Naive thymus-derived CD4-positive, alpha-beta T cell (primary cell): ENCODE measurements at regions of chr1 and their contacts with region 1.

Region 1: GRCh38 chr1:160837558-160838205 is 25.0 kb downstream of the CD244 start:
- DNase-seq: peak; percentile 52 to 91 (median 87)
- ATAC-seq: peak; percentile 97
- H3K4me3 ChIP-seq: peak overlapping the region; percentile 37
- H3K4me3 Mint-ChIP-seq: peak overlapping the region; percentile 62 to 90 (median 76)
- H3K27ac ChIP-seq: peak overlapping the region; percentile 69
- H3K27ac Mint-ChIP-seq: peak overlapping the region; percentile 78 to 98 (median 95)
- H3K4me1 ChIP-seq: peaks cover 50 to 60% of the 10 kb centered on the region in 2 donors
- H3K4me1 Mint-ChIP-seq: peaks cover 57 to 83% (median 71%) of the 10 kb centered on the region in 7 donors
- H3K27me3 ChIP-seq: no peaks in the 10 kb centered on the region
- H3K27me3 Mint-ChIP-seq: no peaks in the 10 kb centered on the region

Region 2: GRCh38 chr1:159924981-159925712 is 912.5 kb before region 1 on chr1 and contains the start of gene TAGLN2:
- CTCF ChIA-PET with region 1: no interaction called
- POLR2A ChIA-PET with region 1: no interaction called
- intact Hi-C with region 1: no loop called
- DNase-seq: peak; percentile 81 to 94 (median 86)
- ATAC-seq: peak; percentile 63
- H3K4me3 ChIP-seq: peak within 1 kb of the TSS; percentile 95
- H3K4me3 Mint-ChIP-seq: peak within 1 kb of the TSS; percentile 88 to 99 (median 94)
- H3K27ac ChIP-seq: peak within 1 kb of the TSS; percentile 95
- H3K27ac Mint-ChIP-seq: peak within 1 kb of the TSS; percentile 96 to 100 (median 99)
- H3K4me1 ChIP-seq: peaks cover 27 to 35% of the 10 kb centered on the region in 2 donors
- H3K4me1 Mint-ChIP-seq: peaks cover 34 to 54% (median 46%) of the 10 kb centered on the region in 7 donors
- H3K27me3 ChIP-seq: no peaks in the 10 kb centered on the region
- H3K27me3 Mint-ChIP-seq: peaks cover 0 to 11% (median 0%) of the 10 kb centered on the region in 5 donors
- total RNA-seq, gene TAGLN2: 116 to 450 (median 284) TPM

Region 3: DNA sequence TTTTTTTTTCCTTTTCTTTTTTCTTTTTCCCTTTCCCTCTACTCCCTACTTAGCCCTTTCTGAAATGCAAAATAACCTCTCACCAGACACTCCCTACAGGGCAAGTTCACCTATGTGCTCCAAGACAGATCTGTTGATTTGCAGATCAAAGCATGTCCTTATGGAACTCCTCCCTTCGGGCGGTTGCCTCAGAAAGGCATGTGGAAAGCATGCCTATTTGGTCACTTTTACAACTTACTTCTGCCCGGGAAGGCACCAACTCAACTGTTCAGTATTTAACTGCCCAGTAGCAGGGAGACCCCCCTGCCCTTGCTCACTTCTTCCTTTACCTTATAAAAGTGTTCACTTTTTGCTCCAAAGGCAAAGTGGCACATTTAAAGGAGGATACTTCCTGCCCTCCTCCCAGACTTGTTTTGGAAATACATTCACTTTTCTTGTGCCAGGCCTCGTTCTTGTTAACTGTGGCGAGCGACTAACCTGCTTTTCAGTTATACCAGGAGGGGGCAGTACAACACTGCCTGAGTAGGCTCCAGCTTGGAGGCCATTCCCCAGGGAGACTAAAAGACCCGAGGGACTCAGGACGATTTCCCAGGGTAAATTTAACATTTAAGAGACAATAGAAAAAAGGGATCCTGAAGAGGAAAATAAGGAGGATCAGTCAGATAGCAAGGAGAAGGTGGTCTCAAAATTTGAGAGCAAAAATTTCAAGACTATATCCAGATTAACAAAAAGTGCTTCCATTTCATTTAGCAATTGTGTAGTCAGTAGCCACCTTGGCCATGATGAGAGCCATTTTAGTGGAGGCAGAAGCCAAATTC is 111.0 kb before region 1 on chr1:
- CTCF ChIA-PET with region 1: interaction called, 17 read pairs
- POLR2A ChIA-PET with region 1: interaction called, 5 read pairs
- intact Hi-C with region 1: loop called in 1 of 2 experiments (anchors 1 kb)
- DNase-seq: peak in 8 of 9 donors; percentile 57 to 80 (median 73)
- ATAC-seq: peak; percentile 97
- H3K4me3 ChIP-seq: no peak overlapping the region
- H3K4me3 Mint-ChIP-seq: no peak overlapping the region
- H3K27ac ChIP-seq: no peak overlapping the region
- H3K27ac Mint-ChIP-seq: no peak overlapping the region
- H3K4me1 ChIP-seq: peaks cover 15 to 21% of the 10 kb centered on the region in 2 donors
- H3K4me1 Mint-ChIP-seq: peaks cover 12 to 29% (median 16%) of the 10 kb centered on the region in 7 donors
- H3K27me3 ChIP-seq: no peaks in the 10 kb centered on the region
- H3K27me3 Mint-ChIP-seq: no peaks in the 10 kb centered on the region

Region 4: DNA sequence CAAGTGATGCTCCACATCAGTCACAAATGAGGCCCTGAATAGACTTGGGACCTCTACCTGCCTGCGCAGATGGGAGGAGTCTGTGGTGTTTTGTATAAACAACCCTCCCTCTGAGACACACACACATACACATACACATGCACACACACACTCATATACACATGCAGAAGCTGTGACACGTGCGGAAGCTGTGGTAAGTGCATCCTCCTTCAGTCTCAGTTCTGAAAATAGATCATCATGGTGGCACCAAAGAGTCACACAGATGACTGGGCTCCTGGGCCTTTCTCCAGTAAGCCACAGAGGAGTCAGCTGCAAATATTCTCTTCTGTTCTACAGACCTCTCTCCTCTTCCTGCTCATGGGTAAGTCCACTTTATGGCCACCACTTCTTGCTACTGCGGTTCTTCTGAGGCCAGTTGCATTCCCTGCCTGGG is 41.7 kb before region 1 on chr1 and contains the start of gene LY9:
- CTCF ChIA-PET with region 1: interaction called, 6 read pairs
- POLR2A ChIA-PET with region 1: interaction called, 21 read pairs
- intact Hi-C with region 1: loop called (anchors 1 to 2 kb)
- DNase-seq: peak; percentile 28 to 97 (median 94)
- ATAC-seq: peak; percentile 96
- H3K4me3 ChIP-seq: peak within 1 kb of the TSS; percentile 66
- H3K4me3 Mint-ChIP-seq: peak within 1 kb of the TSS; percentile 86 to 99 (median 98)
- H3K27ac ChIP-seq: peak within 1 kb of the TSS; percentile 83
- H3K27ac Mint-ChIP-seq: peak within 1 kb of the TSS; percentile 91 to 99 (median 99)
- H3K4me1 ChIP-seq: peaks cover 22 to 29% of the 10 kb centered on the region in 2 donors
- H3K4me1 Mint-ChIP-seq: peaks cover 31 to 66% (median 48%) of the 10 kb centered on the region in 7 donors
- H3K27me3 ChIP-seq: no peaks in the 10 kb centered on the region
- H3K27me3 Mint-ChIP-seq: peaks cover 0 to 21% (median 0%) of the 10 kb centered on the region in 5 donors
- total RNA-seq, gene LY9: 5.6 to 141 (median 105) TPM

Region 5: GRCh38 chr1:160884579-160884978 is 46.9 kb after region 1 on chr1:
- CTCF ChIA-PET with region 1: interaction called, 65 read pairs
- POLR2A ChIA-PET with region 1: no interaction called
- intact Hi-C with region 1: loop called in 1 of 2 experiments (anchors 1 kb)
- DNase-seq: peak in 2 of 9 donors; percentile 32
- ATAC-seq: no peak
- H3K4me3 ChIP-seq: no peak overlapping the region
- H3K4me3 Mint-ChIP-seq: no peak overlapping the region
- H3K27ac ChIP-seq: no peak overlapping the region
- H3K27ac Mint-ChIP-seq: no peak overlapping the region
- H3K4me1 ChIP-seq: no peaks in the 10 kb centered on the region
- H3K4me1 Mint-ChIP-seq: peaks cover 0 to 10% (median 0%) of the 10 kb centered on the region in 7 donors
- H3K27me3 ChIP-seq: no peaks in the 10 kb centered on the region
- H3K27me3 Mint-ChIP-seq: peaks cover 0 to 6% (median 0%) of the 10 kb centered on the region in 5 donors

Region 6: DNA sequence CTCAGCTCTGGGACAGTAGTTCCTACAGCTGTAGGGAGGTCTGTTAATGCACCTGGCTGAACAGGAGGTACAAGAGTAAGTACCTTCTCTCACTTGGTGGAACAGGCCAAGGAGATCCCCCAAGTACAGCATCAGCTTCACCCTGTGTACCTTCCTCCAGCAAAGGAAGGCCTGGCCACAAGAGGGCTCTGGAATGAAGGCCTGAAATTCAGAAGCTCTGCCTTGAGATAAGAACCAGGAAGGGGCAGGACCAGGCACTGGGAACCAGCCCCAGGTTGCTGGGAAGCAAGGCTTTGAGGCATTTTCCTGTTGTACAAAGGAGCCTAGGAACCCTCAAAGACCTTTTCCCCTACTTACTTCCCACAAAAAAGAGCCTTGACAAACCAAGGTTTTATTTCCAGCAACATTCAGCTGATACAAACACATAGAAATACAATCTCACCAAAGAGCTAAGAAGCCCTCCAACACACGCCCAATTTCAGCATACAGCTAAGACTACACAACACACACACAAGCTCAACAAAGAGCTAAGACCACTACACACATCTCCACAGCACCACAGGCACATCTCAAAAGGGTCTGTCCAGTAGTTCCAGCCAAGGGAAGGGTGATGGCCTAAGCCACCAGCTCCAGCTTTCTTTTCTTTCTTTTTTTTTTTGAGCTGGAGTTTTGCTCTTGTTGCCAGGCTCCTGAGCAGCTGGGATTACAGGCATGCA is 159.8 kb after region 1 on chr1:
- CTCF ChIA-PET with region 1: interaction called, 14 read pairs
- POLR2A ChIA-PET with region 1: interaction called, 3 read pairs
- intact Hi-C with region 1: no loop called
- DNase-seq: peak in 8 of 9 donors; percentile 14 to 52 (median 44)
- ATAC-seq: peak; percentile 80
- H3K4me3 ChIP-seq: no peak overlapping the region
- H3K4me3 Mint-ChIP-seq: no peak overlapping the region
- H3K27ac ChIP-seq: no peak overlapping the region
- H3K27ac Mint-ChIP-seq: peak overlapping the region in 8 of 9 donors; percentile 3 to 74 (median 44)
- H3K4me1 ChIP-seq: no peaks in the 10 kb centered on the region
- H3K4me1 Mint-ChIP-seq: peaks cover 6 to 14% (median 11%) of the 10 kb centered on the region in 7 donors
- H3K27me3 ChIP-seq: no peaks in the 10 kb centered on the region
- H3K27me3 Mint-ChIP-seq: no peaks in the 10 kb centered on the region

Region 7: DNA sequence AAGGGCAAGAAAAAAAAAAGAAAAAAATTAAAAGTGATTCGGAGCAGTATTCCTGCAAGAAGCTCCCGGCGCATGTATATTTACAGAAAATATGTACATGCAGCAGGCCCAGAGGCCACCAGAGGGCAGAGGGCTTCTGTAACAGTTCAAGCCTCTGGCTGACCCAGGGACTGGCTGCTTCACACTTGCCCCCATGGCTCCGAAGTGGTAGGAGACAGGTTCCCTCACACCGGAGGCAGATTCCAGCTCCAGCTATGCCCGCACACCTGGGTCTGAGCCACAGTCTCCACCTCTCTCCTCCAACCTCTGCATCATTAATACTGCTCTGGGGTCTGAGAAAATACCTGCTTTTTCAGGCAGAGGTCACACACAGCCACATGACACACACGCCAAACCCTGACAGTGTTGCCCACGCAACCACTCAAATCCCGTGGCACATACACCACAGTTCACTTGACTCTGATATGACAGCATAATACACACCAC is 234.2 kb after region 1 on chr1:
- CTCF ChIA-PET with region 1: interaction called, 3 read pairs
- POLR2A ChIA-PET with region 1: interaction called, 3 read pairs
- intact Hi-C with region 1: loop called (anchors 1 kb)
- DNase-seq: peak; percentile 18 to 50 (median 43)
- ATAC-seq: no peak
- H3K4me3 ChIP-seq: no peak overlapping the region
- H3K4me3 Mint-ChIP-seq: peak overlapping the region in 4 of 10 donors; percentile 11 to 46 (median 19)
- H3K27ac ChIP-seq: no peak overlapping the region
- H3K27ac Mint-ChIP-seq: peak overlapping the region; percentile 27 to 99 (median 91)
- H3K4me1 ChIP-seq: peaks cover 19 to 31% of the 10 kb centered on the region in 2 donors
- H3K4me1 Mint-ChIP-seq: peaks cover 21 to 47% (median 42%) of the 10 kb centered on the region in 7 donors
- H3K27me3 ChIP-seq: no peaks in the 10 kb centered on the region
- H3K27me3 Mint-ChIP-seq: no peaks in the 10 kb centered on the region

Region 8: GRCh38 chr1:161139765-161140164 is 302.1 kb after region 1 on chr1:
- CTCF ChIA-PET with region 1: no interaction called
- POLR2A ChIA-PET with region 1: no interaction called
- intact Hi-C with region 1: loop called (anchors 5 to 10 kb)
- DNase-seq: peak in 5 of 9 donors; percentile 40 to 58 (median 50)
- ATAC-seq: peak; percentile 73
- H3K4me3 ChIP-seq: no peak overlapping the region
- H3K4me3 Mint-ChIP-seq: no peak overlapping the region
- H3K27ac ChIP-seq: no peak overlapping the region
- H3K27ac Mint-ChIP-seq: peak overlapping the region in 1 of 9 donors; percentile 54
- H3K4me1 ChIP-seq: no peaks in the 10 kb centered on the region
- H3K4me1 Mint-ChIP-seq: peaks cover 4 to 17% (median 10%) of the 10 kb centered on the region in 7 donors
- H3K27me3 ChIP-seq: no peaks in the 10 kb centered on the region
- H3K27me3 Mint-ChIP-seq: no peaks in the 10 kb centered on the region